T-cell (primary cell): ENCODE measurements at regions of chr16 and their contacts with region 1.

Region 1: GRCh38 chr16:48608871-48609651 is 919 bp downstream of the N4BP1 start:
- DNase-seq: peak in 27 of 35 experiments; percentile 22 to 60 (median 45)
- ATAC-seq: no peak
- H3K4me3 ChIP-seq: peak overlapping the region; percentile 79 to 85
- H3K4me3 Mint-ChIP-seq: no peak overlapping the region
- H3K27ac ChIP-seq: peak overlapping the region; percentile 82
- H3K27ac Mint-ChIP-seq: peak overlapping the region; percentile 84 to 91
- H3K4me1 ChIP-seq: peaks cover 41 to 88% of the 10 kb centered on the region in 2 experiments
- H3K4me1 Mint-ChIP-seq: peaks cover 37 to 45% (median 40%) of the 10 kb centered on the region in 3 donors
- H3K27me3 ChIP-seq: no peaks in the 10 kb centered on the region
- H3K27me3 Mint-ChIP-seq: peaks cover 0 to 1% of the 10 kb centered on the region in 2 donors

Region 2: DNA sequence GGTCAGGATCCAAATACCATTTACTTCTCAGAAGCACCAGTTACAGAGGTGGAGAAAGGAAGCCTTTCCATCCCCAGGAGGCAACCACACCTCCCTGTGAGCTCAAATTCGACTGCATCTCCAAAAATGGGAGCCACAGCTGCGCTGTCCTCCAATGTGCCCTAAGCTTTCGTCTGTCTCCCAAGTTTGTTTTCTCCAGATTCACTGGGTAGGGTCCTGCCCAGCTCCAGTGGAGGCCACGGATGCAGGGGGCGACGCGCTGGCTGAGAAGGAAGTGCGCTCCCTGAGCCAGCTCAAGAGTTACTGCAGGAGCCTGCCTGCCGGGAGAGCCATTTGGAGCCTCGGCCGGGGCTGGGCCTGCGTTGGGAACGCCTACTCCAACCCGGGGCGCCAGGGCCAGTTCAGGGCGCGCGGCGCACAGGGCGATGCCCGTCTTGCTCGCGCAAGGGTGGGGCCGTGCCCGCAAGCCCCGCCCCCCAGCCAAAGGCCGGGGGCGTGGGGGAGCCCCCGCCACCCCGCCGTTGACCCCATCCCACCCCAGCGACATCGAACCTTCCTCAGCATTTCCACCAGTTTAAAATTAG is 243.4 kb before region 1 on chr16:
- CTCF ChIA-PET with region 1: interaction called in 1 of 2 experiments, 3 read pairs
- POLR2A ChIA-PET with region 1: interaction called in 1 of 2 experiments, 11 read pairs
- DNase-seq: peak; percentile 46 to 78 (median 64)
- ATAC-seq: peak; percentile 90 to 95 (median 94)
- H3K4me3 ChIP-seq: peak overlapping the region; percentile 66 to 79
- H3K4me3 Mint-ChIP-seq: peak overlapping the region; percentile 80 to 93 (median 87)
- H3K27ac ChIP-seq: peak overlapping the region; percentile 87
- H3K27ac Mint-ChIP-seq: peak overlapping the region; percentile 89 to 97
- H3K4me1 ChIP-seq: peaks cover 15 to 17% of the 10 kb centered on the region in 2 experiments
- H3K4me1 Mint-ChIP-seq: peaks cover 44 to 63% (median 48%) of the 10 kb centered on the region in 3 donors
- H3K27me3 ChIP-seq: no peaks in the 10 kb centered on the region
- H3K27me3 Mint-ChIP-seq: no peaks in the 10 kb centered on the region

Region 3: DNA sequence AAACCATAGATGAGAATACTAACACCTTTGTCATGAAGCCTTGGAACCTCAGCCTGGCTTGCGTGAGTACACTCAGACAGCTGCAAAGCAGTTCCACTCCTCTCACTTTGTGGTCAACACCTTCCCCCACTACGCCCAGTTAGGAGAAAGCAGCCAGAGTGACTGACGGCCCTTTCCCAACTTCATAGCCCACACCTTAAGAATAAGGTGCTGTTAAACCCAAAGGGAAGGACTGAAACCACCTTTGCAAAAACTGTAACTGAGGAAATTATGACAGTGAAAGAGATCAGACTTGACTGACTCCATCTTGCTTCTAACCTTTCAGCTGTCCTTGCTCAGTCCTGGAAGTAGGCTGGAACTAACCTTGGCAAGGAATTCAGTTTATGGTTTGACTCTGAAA is 12.7 kb before region 1 on chr16:
- CTCF ChIA-PET with region 1: interaction called in 1 of 2 experiments, 6 read pairs
- POLR2A ChIA-PET with region 1: interaction called, 11 read pairs
- DNase-seq: peak in 2 of 35 experiments; percentile 8 to 49
- ATAC-seq: peak in 2 of 4 experiments; percentile 48 to 56
- H3K4me3 ChIP-seq: no peak overlapping the region
- H3K4me3 Mint-ChIP-seq: peak overlapping the region in 1 of 3 donors; percentile 8
- H3K27ac ChIP-seq: no peak overlapping the region
- H3K27ac Mint-ChIP-seq: peak overlapping the region; percentile 69 to 75
- H3K4me1 ChIP-seq: peaks cover 15 to 19% of the 10 kb centered on the region in 2 experiments
- H3K4me1 Mint-ChIP-seq: peaks cover 60 to 67% (median 65%) of the 10 kb centered on the region in 3 donors
- H3K27me3 ChIP-seq: no peaks in the 10 kb centered on the region
- H3K27me3 Mint-ChIP-seq: no peaks in the 10 kb centered on the region